ENCODE measurements at regions of chr6 and their contacts with region 1.

Region 1: DNA sequence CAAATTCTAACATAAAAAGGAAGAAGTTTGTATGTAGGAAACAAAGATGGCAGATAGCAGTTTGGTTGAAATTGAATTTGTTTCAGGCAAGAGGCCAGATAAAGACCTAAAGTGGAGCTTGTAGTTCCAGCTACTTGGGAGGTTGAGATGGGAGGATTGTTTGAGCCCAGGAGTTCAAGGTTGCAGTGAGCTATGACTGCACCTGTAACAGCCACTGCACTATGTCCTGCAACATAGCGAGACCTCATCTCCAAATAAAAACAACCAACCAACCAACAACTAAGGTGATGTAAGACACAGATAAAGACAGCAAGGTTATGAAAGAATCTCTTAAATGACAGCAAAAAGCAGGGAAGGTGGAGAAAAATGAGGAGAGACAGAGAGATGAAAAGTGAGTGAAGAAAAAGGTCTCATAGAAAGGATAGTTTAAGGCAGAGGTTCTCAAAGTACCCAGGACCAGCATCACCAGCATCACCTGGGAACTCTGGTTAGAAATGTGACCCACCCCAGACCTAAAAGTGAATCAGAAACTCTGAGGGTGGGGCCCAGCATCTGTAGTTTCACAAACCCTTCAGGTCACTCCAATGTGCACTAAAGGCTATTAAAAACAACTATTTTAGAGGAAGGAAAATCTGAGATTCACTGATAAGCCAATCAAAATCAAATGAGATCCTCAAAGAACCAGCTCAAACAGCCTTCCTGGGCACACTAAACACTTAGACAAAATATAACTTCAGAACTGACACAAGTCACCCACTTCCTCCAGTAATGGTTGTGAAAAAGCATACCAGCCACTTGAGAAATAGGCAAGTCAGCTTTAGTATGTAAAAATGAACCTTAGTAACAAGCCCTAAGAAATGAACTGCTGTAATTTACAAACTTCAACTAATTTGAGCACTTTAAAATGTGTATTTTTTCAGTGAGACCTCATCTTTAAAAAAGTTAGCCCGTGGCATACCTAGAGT is 57.6 kb downstream of the FAM184A start:
- DNase-seq: no peak
- ATAC-seq: no peak
- H3K4me3 ChIP-seq: no peak overlapping the region
- H3K27ac ChIP-seq: no peak overlapping the region
- H3K4me1 ChIP-seq: no peaks in the 10 kb centered on the region
- H3K27me3 ChIP-seq: no peaks in the 10 kb centered on the region
- CTCF ChIP-seq: no peak

Region 2: DNA sequence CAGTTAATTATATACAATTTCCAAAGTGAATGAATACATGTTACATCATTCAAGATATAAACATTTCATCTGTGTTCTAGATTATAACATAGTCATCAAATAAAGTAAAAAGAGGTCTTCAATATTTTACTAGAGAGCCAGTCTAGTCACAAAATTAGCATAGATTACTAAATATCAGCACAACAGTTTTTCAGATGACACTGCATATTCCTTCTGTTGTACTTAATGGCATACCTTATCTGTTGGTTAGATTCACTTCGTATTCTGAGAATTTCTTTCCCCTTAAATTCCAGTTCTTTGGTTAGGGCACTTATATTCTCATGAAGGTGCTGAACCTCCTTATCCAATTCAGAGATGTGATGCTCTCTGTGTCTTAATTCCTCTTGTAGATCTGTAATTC is 46.1 kb before region 1 on chr6:
- CTCF ChIA-PET with region 1: interaction called, 10 read pairs
- POLR2A ChIA-PET with region 1: no interaction called
- in situ Hi-C with region 1: no loop called
- intact Hi-C with region 1: no loop called
- DNase-seq: no peak
- ATAC-seq: no peak
- H3K4me3 ChIP-seq: no peak overlapping the region
- H3K27ac ChIP-seq: no peak overlapping the region
- H3K4me1 ChIP-seq: no peaks in the 10 kb centered on the region
- H3K27me3 ChIP-seq: no peaks in the 10 kb centered on the region
- CTCF ChIP-seq: no peak

Measured in Panc1 (cell line).